ENCODE measurements at regions of chr2 and their contacts with region 1.

Region 1: GRCh38 chr2:85888684-85889626 is at the start of gene ST3GAL5:
- DNase-seq: peak; percentile 91
- H3K4me3 ChIP-seq: peak within 1 kb of the TSS; percentile 76 to 86
- H3K27ac ChIP-seq: peak within 1 kb of the TSS; percentile 74 to 82
- H3K4me1 ChIP-seq: no peaks in the 10 kb centered on the region
- H3K27me3 ChIP-seq: no peaks in the 10 kb centered on the region
- CTCF ChIP-seq: peak; percentile 62 to 76 (median 74)
- POLR2A ChIP-seq: peak; percentile 34
- total RNA-seq, gene ST3GAL5: 24.7 to 38.6 TPM

Region 2: GRCh38 chr2:85737481-85737880 is 151.5 kb before region 1 on chr2:
- intact Hi-C with region 1: loop called (anchors 10 kb)
- DNase-seq: no peak
- H3K4me3 ChIP-seq: no peak overlapping the region
- H3K27ac ChIP-seq: peak overlapping the region; percentile 46 to 47
- H3K4me1 ChIP-seq: peaks cover 14% of the 10 kb centered on the region
- H3K27me3 ChIP-seq: no peaks in the 10 kb centered on the region
- CTCF ChIP-seq: no peak
- POLR2A ChIP-seq: no peak

Region 3: DNA sequence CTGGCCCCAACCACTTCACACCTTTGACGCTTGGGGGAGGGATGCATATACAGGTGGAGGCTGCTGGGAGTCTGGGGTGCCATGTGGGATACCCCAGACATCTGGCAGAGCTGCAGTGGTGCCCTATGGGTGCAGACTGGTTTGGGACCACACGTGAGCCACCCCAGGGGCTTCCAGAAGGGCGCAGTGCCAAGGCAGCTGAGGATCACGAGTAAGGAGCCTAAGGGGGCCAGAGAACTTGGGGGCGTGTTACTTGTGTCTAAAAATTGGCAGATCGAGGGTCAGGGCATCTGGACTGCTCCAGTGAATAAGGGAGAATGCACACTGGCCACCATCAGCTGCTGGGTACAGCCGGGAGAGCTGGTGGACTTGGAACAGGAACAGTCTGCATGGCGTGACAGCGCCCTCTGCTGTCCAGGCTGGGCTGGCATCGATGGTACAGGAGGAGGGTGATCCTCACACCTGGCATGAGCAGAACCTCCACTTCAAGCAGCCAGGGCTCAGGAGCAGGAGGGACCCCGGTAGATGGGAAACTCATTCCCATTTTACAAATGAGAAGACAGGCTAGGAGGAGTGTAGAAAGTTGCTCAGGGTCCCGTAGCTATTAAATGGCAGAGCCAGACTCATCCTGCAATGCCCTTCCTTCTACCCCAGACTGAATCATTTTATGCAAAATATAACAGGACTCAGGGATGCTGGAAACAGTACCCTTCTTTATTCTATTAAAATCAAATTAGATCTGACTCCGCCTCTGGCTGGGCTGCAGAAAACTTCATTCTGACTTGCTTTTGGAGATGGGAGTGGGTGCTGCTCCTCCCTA is 74.8 kb before region 1 on chr2:
- intact Hi-C with region 1: no loop called
- DNase-seq: peak; percentile 93
- H3K4me3 ChIP-seq: no peak overlapping the region
- H3K27ac ChIP-seq: no peak overlapping the region
- H3K4me1 ChIP-seq: peaks cover 15% of the 10 kb centered on the region
- H3K27me3 ChIP-seq: no peaks in the 10 kb centered on the region
- CTCF ChIP-seq: peak; percentile 94 to 98 (median 97)
- POLR2A ChIP-seq: no peak

Region 4: GRCh38 chr2:85852937-85853498 is 35.9 kb before region 1 on chr2:
- intact Hi-C with region 1: loop called (anchors 5 kb)
- DNase-seq: no peak
- H3K4me3 ChIP-seq: no peak overlapping the region
- H3K27ac ChIP-seq: no peak overlapping the region
- H3K4me1 ChIP-seq: no peaks in the 10 kb centered on the region
- H3K27me3 ChIP-seq: no peaks in the 10 kb centered on the region
- CTCF ChIP-seq: no peak
- POLR2A ChIP-seq: no peak

Region 5: DNA sequence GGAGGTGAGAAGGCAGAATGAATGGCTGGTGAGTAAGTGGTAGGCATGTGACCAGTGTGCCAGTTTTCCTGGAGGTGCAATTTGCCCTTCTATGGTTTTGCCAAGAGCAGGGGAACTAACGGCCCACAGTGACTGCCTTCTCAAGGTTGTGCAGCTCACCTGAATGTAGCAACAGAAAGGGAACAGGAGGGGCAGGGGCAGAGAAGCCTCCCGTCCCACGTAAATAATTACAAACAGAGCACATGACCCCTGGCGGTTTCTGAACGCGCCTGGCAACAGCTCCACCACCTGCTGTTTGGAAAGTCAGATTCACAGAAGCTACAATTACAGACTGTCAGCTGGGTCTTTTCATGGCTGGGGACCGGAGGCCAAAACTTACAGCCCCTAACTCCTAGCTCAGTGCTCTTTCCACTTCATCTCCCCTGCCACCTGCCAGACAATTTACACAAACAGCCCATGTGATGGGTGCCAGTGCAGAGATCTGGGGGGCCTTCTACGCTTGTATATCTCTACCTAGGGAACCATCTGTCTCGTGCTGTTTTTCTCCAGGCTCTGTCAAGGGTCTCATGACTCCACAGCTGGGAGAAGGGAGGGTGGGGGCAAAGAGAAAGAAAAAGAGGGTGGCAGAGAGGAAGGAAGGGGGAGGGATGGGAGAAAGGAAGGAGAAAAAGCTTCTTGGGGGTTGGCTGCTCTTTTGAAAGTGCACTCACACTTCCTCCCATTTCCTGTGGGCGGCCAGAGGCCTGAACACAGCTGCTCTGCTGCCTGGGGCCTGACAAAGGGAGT is 147.1 kb after region 1 on chr2:
- intact Hi-C with region 1: loop called (anchors 2 kb)
- DNase-seq: peak; percentile 76
- H3K4me3 ChIP-seq: no peak overlapping the region
- H3K27ac ChIP-seq: peak overlapping the region; percentile 69 to 73
- H3K4me1 ChIP-seq: no peaks in the 10 kb centered on the region
- H3K27me3 ChIP-seq: no peaks in the 10 kb centered on the region
- CTCF ChIP-seq: peak in 2 of 4 experiments; percentile 53 to 57
- POLR2A ChIP-seq: no peak

Region 6: DNA sequence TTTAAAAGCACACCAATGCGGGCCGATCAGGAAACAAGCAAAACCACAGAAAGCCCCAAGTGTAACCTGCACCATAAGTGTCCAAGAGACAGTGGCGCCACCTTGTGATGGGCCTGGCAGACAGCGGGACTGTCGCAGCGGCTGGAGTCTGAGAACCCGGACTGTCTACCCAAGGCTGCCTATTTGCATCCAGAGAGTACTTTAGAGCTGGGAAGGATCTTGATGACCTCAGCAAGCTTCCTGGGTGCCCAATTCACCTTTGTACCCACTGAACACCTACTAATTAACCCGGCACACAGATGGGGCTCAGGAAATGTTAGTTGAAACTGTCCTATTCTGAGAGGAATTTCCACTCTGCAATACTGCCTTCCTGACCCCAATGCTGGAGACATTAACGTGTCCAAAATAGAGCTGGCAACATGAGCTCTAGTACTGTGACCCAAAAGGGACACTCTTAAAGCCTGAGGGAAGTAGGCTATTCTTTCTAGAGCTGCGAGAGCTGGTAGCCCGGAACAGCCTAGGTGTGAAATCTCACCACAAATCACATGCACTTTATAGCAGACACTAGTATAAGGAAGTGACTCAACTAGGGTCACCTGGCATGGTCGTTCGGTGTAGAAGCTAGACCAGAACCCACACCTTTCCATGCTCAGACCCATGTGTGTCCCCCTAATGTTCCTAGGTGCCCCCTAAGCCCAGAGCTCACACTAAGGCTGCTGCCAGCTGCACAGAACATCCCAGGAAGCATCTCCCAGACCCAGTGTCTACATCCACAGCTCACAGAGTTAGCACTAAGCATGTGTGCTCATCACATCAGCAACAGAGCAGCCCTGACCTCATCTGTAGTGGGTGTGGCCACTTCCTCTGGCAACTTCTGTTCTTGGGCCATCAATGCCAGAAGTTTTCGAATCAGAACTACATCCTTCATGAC is 191.3 kb after region 1 on chr2:
- intact Hi-C with region 1: loop called (anchors 2 kb)
- DNase-seq: peak; percentile 70
- H3K4me3 ChIP-seq: no peak overlapping the region
- H3K27ac ChIP-seq: no peak overlapping the region
- H3K4me1 ChIP-seq: peaks cover 4% of the 10 kb centered on the region
- H3K27me3 ChIP-seq: no peaks in the 10 kb centered on the region
- CTCF ChIP-seq: peak; percentile 48 to 85 (median 73)
- POLR2A ChIP-seq: no peak